ENCODE measurements at regions of chr5 and their contacts with region 1.

Region 1: GRCh38 chr5:179858586-179859427 is at the start of gene MRNIP:
- DNase-seq: peak; percentile 96 to 97
- ATAC-seq: peak; percentile 94 to 95
- H3K4me3 ChIP-seq: peak within 1 kb of the TSS; percentile 86 to 98 (median 92)
- H3K27ac ChIP-seq: peak within 1 kb of the TSS; percentile 89 to 98 (median 97)
- H3K4me1 ChIP-seq: peaks cover 13 to 16% of the 10 kb centered on the region in 2 donors
- H3K27me3 ChIP-seq: no peaks in the 10 kb centered on the region
- CTCF ChIP-seq: peak in 3 of 5 experiments; percentile 26 to 54 (median 40)
- POLR2A ChIP-seq: peak; percentile 81 to 82
- total RNA-seq, gene MRNIP: 2.9 to 16.1 (median 8.3) TPM

Region 2: GRCh38 chr5:179697993-179698934 is 160.5 kb before region 1 on chr5:
- in situ Hi-C with region 1: no loop called
- intact Hi-C with region 1: loop called (anchors 1 kb)
- DNase-seq: peak; percentile 99 to 100
- ATAC-seq: peak; percentile 90 to 96
- H3K4me3 ChIP-seq: peak overlapping the region; percentile 83 to 99 (median 88)
- H3K27ac ChIP-seq: peak overlapping the region; percentile 93 to 100 (median 98)
- H3K4me1 ChIP-seq: peaks cover 21 to 28% of the 10 kb centered on the region in 2 donors
- H3K27me3 ChIP-seq: no peaks in the 10 kb centered on the region
- CTCF ChIP-seq: no peak
- POLR2A ChIP-seq: peak; percentile 90 to 91

Region 3: GRCh38 chr5:179795863-179796833 is 62.7 kb before region 1 on chr5:
- in situ Hi-C with region 1: no loop called
- intact Hi-C with region 1: loop called (anchors 1 kb)
- DNase-seq: peak in 1 of 2 donors; percentile 68
- ATAC-seq: peak; percentile 74 to 84
- H3K4me3 ChIP-seq: peak overlapping the region; percentile 55 to 65 (median 60)
- H3K27ac ChIP-seq: peak overlapping the region; percentile 62 to 81 (median 76)
- H3K4me1 ChIP-seq: peaks cover 17 to 22% of the 10 kb centered on the region in 2 donors
- H3K27me3 ChIP-seq: no peaks in the 10 kb centered on the region
- CTCF ChIP-seq: peak; percentile 60 to 95 (median 84)
- POLR2A ChIP-seq: peak; percentile 45 to 46

Region 4: DNA sequence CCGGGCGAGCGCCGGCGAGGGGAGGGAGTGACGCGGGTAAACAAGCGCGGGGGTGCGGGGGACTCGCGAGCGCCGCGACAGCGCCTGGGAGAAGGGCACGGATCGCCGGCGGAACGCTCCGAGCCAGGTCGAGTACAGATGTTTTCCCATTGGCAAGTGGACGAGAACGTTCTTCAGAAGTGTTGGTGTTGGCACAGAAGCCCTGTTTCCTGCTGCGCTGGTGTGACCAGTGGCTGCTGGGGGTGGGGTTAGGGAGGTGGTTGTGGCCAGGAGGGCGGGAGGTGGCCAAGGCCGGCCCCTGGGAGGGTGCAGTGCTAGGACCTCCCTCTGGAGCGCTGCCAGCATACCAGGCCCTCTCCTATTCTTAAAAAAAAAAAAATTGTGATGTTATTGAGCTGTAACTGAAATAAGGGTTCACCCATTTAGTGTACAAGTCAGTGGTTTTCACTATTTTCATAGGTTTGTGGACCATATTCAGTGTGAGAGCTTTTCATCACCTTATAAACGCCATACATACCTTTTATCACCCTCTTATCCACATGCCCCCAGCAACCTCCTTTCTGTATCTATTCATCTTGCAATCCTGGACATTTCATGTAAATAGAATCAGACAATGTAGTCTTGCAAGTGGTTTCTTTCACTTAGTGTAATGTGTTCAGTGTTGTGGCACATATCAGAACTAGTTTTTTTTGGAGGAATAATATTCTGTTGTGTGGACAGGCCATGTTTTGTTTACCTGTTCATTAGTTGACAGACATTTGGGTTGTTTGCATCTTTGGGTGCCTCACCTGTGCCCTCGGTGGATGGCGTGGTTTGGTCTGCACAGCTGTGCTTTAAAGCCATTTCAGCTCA is 37.0 kb before region 1 on chr5:
- in situ Hi-C with region 1: no loop called
- intact Hi-C with region 1: loop called (anchors 1 kb)
- DNase-seq: peak; percentile 97 to 98
- ATAC-seq: peak; percentile 50 to 51
- H3K4me3 ChIP-seq: peak overlapping the region; percentile 89 to 97 (median 94)
- H3K27ac ChIP-seq: peak overlapping the region; percentile 95 to 100 (median 99)
- H3K4me1 ChIP-seq: peaks cover 65 to 66% of the 10 kb centered on the region in 2 donors
- H3K27me3 ChIP-seq: no peaks in the 10 kb centered on the region
- CTCF ChIP-seq: no peak
- POLR2A ChIP-seq: peak; percentile 77 to 90

Region 5: GRCh38 chr5:179907570-179908324 is 48.9 kb after region 1 on chr5 and contains the start of gene TBC1D9B:
- in situ Hi-C with region 1: no loop called
- intact Hi-C with region 1: loop called (anchors 2 kb)
- DNase-seq: peak in 1 of 2 donors; percentile 49
- ATAC-seq: peak; percentile 80 to 84
- H3K4me3 ChIP-seq: peak within 1 kb of the TSS; percentile 65 to 77 (median 68)
- H3K27ac ChIP-seq: peak within 1 kb of the TSS; percentile 78 to 85 (median 82)
- H3K4me1 ChIP-seq: peaks cover 10 to 25% of the 10 kb centered on the region in 2 donors
- H3K27me3 ChIP-seq: no peaks in the 10 kb centered on the region
- CTCF ChIP-seq: peak in 4 of 5 experiments; percentile 70 to 71 (median 70)
- POLR2A ChIP-seq: peak; percentile 40 to 52
- total RNA-seq, gene TBC1D9B: 56.1 to 65.9 (median 62.7) TPM

Region 6: DNA sequence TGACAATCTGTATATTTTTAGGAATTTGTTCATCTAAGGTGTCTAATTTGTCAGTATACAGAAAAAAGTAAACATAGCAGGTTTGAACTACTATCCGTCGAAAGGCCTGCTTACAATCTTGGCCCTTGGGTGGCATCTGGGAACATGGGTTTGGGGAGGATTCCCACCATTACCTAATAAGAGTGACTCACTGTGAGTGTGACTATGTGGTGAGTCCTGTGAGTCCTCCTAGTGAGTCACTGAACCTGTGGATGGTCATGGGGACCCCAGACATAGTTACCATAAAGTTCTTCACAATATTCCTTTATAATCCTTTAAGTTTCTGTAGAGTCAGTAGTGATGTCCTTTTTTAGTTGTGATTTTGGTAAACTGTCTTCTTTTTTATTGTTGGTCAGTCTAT is 175.8 kb after region 1 on chr5:
- in situ Hi-C with region 1: no loop called
- intact Hi-C with region 1: no loop called
- DNase-seq: no peak
- ATAC-seq: no peak
- H3K4me3 ChIP-seq: no peak overlapping the region
- H3K27ac ChIP-seq: no peak overlapping the region
- H3K4me1 ChIP-seq: no peaks in the 10 kb centered on the region
- H3K27me3 ChIP-seq: no peaks in the 10 kb centered on the region
- CTCF ChIP-seq: no peak
- POLR2A ChIP-seq: no peak

Measured in gastrocnemius medialis (tissue), 4 donors.